Aorta (tissue), 5 donors: ENCODE measurements at regions of chr5 and their contacts with region 1.

Region 1: DNA sequence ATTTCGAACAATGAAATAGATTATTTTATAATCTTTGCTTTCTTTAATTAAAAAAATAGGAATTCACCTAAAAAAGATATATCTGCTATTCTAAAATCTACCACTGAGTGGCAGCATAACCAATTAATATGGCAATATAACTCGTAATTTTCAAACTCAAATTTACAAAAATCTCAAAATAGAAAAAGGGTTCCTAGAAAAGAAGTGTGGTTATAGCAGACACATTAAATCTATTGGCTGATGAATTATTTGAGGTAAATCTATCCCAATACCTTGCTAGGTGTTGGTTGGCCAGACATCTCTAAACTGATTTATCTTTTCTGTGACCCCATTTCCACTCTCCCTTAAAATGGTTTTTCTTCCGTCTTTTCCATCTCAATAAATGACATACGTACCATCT is 30.2 kb upstream of the NRG2 start:
- DNase-seq: no peak
- ATAC-seq: no peak
- H3K4me3 ChIP-seq: no peak overlapping the region
- H3K27ac ChIP-seq: no peak overlapping the region
- H3K4me1 ChIP-seq: no peaks in the 10 kb centered on the region
- H3K27me3 ChIP-seq: no peaks in the 10 kb centered on the region

Region 2: DNA sequence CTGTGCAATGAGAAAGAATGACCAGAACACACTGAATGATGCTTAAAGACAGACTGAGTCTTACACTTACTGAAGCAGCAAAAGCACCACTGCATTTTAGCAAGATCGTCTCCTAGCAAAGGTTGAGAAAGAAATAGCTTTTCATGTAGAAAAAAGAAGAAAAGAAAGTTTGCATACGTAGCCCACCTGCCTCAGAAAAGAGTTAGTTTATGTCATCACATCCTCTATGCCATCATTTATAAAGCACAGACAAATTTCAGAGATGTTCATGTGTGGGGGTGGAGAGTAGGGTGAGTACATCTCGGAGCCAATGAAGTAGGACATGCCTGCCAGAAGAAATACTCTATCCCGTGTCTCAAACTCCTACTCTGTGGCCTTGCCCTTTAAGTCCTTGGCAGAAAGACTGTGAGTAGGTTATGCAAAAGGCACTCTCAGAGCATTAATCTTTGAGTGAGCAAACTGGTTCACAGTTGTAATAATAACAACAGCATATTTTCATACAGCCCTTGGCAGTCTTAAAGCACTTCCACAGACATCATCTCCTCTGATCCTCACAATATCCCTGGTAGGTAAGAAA is 52.6 kb before region 1 on chr5:
- intact Hi-C with region 1: no loop called
- DNase-seq: no peak
- ATAC-seq: peak; percentile 61
- H3K4me3 ChIP-seq: no peak overlapping the region
- H3K27ac ChIP-seq: no peak overlapping the region
- H3K4me1 ChIP-seq: peaks cover 2 to 5% of the 10 kb centered on the region in 2 donors
- H3K27me3 ChIP-seq: peaks cover 0 to 1% of the 10 kb centered on the region in 2 donors

Region 3: GRCh38 chr5:140145818-140146522 is 72.7 kb after region 1 on chr5:
- intact Hi-C with region 1: loop called in 1 of 2 experiments (anchors 5 kb)
- DNase-seq: peak; percentile 82 to 93
- ATAC-seq: peak; percentile 90
- H3K4me3 ChIP-seq: peak overlapping the region in 1 of 2 donors; percentile 5
- H3K27ac ChIP-seq: no peak overlapping the region
- H3K4me1 ChIP-seq: no peaks in the 10 kb centered on the region
- H3K27me3 ChIP-seq: no peaks in the 10 kb centered on the region

Region 4: DNA sequence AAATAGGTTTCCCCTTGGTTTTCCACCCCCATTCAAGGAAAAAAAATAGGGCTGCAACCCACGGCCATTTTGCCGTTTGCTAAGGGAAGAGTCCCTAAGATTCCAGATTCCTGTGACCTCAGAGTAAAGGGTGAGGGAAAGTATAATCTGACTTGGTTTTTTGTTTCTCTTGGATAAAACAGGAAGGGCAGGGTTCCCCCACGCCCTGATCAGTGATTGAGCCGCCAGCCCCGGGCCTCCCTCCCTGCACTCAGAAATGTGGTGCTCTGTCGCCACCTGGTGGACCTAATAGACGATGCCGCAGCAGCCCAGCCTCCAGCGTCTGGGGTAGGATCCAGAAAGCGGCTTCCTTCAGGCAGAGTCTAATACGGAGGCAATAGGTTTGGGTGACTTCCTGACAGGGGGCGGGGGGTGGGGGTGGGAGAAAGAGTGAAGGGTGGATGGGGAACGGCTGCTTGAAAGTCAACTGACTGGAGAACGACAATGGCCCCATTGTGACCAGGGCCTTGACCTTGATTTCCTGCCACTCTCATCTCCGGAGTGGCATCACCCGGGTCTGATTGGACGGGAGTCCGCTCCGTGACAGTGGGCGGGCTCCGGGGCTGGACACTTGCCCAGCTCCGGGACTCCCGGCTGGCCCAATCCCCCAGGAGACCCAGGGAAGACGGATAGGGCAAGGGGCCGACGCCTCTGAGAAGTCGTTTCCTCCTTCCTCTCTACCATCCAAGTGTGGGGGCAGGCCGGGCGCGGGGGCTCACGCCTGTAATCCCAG is 83.9 kb after region 1 on chr5:
- intact Hi-C with region 1: loop called (anchors 1 kb)
- DNase-seq: peak; percentile 91 to 96
- ATAC-seq: peak; percentile 95
- H3K4me3 ChIP-seq: no peak overlapping the region
- H3K27ac ChIP-seq: no peak overlapping the region
- H3K4me1 ChIP-seq: no peaks in the 10 kb centered on the region
- H3K27me3 ChIP-seq: no peaks in the 10 kb centered on the region